Posterior cingulate gyrus (tissue), 11 donors: ENCODE measurements at regions of chr13 and their contacts with region 1.

Region 1: GRCh38 chr13:40666045-40666904 is at the start of gene FOXO1:
- DNase-seq: peak; percentile 71 to 97 (median 78)

Region 2: DNA sequence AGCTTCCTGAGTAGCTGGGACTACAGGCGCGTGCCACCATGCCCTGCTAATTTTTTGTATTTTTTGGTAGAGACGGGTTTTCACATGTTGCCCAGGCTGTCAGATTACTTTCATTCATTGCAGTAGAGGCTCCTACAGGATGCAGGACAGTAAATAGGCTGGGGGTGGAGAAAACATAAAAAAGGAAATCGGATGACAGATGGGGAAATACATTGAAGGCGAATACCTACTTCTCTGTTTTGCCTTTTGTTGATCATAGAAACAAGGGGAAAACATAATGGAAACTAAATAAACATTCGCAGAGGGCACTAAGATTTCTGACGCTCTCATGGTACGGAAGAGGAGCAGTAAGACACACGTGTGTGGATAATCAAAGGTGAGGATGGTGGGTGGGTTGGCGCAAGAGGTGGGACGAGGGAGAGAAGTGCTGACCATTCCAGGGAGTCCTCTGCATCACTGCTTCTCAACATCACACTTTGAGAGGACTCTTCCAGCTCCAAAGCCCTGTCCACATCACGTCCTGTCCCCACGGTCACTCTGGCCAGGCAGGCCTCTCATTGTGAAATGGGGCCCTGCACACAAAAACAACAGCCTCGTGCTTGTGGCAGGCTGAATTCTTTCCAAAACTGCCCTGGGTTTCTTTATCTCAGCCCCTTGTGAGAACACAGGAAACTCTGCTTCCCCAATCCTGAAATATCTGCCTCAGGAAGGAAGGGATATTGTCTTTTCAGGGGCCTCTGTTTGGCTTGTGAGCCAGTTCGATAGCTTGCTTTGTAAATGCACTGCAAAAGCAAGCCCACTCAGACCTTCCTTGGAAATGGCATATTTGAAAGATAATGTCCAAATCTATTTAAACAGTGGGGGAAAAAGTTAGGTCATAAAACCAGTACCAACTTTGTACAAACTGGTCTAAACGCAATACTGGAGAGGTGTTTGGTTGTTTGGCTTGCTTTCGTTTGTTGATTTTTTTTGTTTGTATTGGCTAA is 188.4 kb before region 1 on chr13:
- intact Hi-C with region 1: loop called (anchors 10 kb)
- DNase-seq: no peak

Region 3: DNA sequence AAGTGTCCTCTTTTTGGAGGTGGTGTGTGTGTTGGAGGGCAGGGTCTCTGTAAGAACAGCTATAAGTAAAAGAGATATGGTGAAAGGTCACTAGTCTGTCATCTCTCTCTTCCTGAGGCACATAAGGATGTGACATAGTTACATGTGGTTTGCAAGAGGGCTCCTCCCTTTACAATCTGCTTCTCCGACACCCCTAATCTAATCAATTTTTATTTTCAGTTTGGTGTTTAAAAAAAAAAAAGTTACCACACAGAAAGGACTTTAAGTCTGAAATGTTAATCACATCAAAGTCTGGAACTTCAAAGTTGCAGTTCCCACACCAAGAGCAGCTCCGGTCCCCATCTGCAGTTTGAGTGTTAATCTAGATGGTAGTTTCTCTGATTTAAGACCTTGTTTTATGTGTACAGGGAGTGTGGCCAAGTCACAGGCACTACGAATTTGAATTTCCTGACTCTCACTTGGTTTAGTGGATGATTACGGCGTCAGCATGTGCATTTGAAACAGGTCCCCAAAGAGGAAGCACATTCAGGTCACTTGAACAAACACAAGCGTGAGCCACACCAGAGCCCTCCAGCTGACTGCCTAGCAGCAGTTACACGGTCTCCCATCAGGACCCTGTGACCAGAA is 53.0 kb before region 1 on chr13:
- intact Hi-C with region 1: loop called (anchors 10 kb)
- DNase-seq: peak in 2 of 10 donors; percentile 22 to 84

Region 4: GRCh38 chr13:40728595-40728994 is 62.3 kb after region 1 on chr13:
- intact Hi-C with region 1: no loop called
- DNase-seq: no peak